Activated CD4-positive, alpha-beta T cell treated with anti-CD3 and anti-CD28 coated beads, Interleukin-2, amount 10 ng/mL, durations not matched to agents 24 days and 14 days (primary cell): ENCODE measurements at regions of chr11 and their contacts with region 1.

Region 1: GRCh38 chr11:13772223-13773046 is 104.0 kb downstream of the FAR1 start:
- DNase-seq: peak; percentile 85
- H3K4me3 Mint-ChIP-seq: no peak overlapping the region
- H3K27ac Mint-ChIP-seq: no peak overlapping the region
- H3K4me1 Mint-ChIP-seq: peaks cover 6% of the 10 kb centered on the region
- H3K27me3 Mint-ChIP-seq: peaks cover 26% of the 10 kb centered on the region

Region 2: GRCh38 chr11:12281571-12282478 is 1490.6 kb before region 1 on chr11:
- intact Hi-C with region 1: no loop called
- DNase-seq: peak; percentile 93
- H3K4me3 Mint-ChIP-seq: no peak overlapping the region
- H3K27ac Mint-ChIP-seq: peak overlapping the region; percentile 71
- H3K4me1 Mint-ChIP-seq: peaks cover 18% of the 10 kb centered on the region
- H3K27me3 Mint-ChIP-seq: no peaks in the 10 kb centered on the region

Region 3: DNA sequence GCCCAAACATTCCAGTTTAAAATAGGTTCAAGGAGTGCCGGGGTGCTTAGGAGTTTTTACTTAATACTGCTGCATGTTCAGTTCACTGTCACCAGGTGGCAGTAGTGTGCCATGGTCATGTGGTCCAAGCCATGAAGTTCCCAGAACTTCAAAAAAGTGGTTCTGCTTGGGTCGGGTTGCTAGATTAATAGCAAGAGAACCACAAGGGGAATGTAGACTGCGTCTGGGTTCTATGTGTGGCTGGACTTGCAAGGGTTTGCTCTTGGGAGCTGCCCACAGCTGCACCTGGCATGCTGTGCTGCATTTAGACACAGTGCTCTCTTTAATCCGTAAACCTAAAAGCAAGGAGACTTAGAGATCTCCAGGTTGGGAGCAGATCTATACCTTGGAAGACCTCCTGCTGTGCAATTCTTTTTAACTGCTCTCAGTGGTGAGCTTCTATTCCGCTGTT is 183.6 kb after region 1 on chr11:
- intact Hi-C with region 1: loop called (anchors 2 kb)
- DNase-seq: peak; percentile 84
- H3K4me3 Mint-ChIP-seq: no peak overlapping the region
- H3K27ac Mint-ChIP-seq: no peak overlapping the region
- H3K4me1 Mint-ChIP-seq: no peaks in the 10 kb centered on the region
- H3K27me3 Mint-ChIP-seq: peaks cover 38% of the 10 kb centered on the region

Region 4: GRCh38 chr11:14148653-14149273 is 376.3 kb after region 1 on chr11:
- intact Hi-C with region 1: loop called (anchors 2 kb)
- DNase-seq: peak; percentile 63
- H3K4me3 Mint-ChIP-seq: no peak overlapping the region
- H3K27ac Mint-ChIP-seq: no peak overlapping the region
- H3K4me1 Mint-ChIP-seq: no peaks in the 10 kb centered on the region
- H3K27me3 Mint-ChIP-seq: peaks cover 13% of the 10 kb centered on the region

Region 5: DNA sequence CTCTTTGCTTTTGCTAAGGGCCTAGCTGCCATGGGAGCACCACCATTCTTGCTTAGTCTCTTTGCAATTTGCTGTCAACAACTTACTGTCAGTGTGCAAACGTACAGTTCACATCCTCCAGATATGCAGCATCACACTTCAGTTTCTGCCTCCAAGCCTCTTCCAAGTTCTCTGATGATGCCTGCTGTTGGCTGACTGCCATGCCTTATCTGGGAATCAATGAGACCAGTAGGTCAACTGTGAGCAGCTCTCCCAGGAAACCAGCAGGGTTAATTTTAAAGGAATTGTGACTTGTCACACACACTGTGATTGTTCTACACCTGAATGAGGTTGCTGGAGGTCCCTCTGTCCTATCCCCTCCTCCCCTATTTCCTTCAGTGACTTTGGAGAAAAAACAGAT is 671.2 kb after region 1 on chr11:
- intact Hi-C with region 1: loop called (anchors 10 kb)
- DNase-seq: no peak
- H3K4me3 Mint-ChIP-seq: no peak overlapping the region
- H3K27ac Mint-ChIP-seq: no peak overlapping the region
- H3K4me1 Mint-ChIP-seq: peaks cover 28% of the 10 kb centered on the region
- H3K27me3 Mint-ChIP-seq: no peaks in the 10 kb centered on the region